ENCODE measurements at regions of chr7 and their contacts with region 1.

Region 1: GRCh38 chr7:151705636-151706276 is 171.2 kb downstream of the PRKAG2 start:
- DNase-seq: peak in 1 of 2 experiments; percentile 63
- H3K4me3 ChIP-seq: no peak overlapping the region
- H3K27ac ChIP-seq: no peak overlapping the region
- H3K4me1 ChIP-seq: peaks cover 0 to 3% (median under 1%) of the 10 kb centered on the region in 4 experiments; a peak in 3 of 7 replicates
- H3K27me3 ChIP-seq: no peaks in the 10 kb centered on the region; a peak in 3 of 7 replicates
- CTCF ChIP-seq: peak; percentile 51 to 74 (median 67)
- EP300 ChIP-seq: no peak
- POLR2A ChIP-seq: no peak
- RAD21 ChIP-seq: peak; percentile 67 to 73

Region 2: DNA sequence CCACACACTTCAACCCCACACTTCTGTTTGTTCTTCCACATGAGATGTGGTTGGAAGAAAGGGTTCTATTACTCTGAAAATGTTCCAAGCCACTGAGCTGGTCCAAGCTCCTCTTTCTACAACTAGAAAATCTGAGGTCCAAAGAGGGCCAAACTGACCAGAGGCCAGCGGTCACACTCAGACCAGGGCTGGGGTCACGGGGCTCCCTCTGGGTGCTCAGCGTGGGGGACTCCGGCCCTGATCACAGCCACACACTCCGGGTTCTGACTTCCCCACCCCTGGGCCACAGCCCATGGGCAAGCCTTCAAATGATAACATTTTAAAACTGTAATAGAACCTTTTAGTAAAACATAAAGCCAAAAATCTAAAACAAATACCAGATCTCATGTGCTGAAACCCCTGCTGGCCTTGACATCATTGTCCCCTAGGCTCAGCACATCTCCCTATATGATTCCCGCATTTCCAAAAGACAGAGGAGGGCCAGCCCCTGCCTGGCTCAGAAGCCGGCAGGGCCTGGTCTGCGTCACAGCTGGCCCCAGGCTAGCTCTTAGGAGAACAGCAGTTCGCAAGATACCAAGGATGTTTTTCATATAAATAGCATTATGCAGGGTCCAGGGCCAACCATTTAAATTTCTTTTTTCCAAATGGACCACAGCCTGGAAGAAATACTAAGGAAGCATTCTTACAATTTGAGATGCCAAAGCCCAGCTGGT is 269.2 kb before region 1 on chr7:
- CTCF ChIA-PET with region 1: no interaction called
- POLR2A ChIA-PET with region 1: no interaction called
- DNase-seq: no peak
- H3K4me3 ChIP-seq: no peak overlapping the region
- H3K27ac ChIP-seq: no peak overlapping the region
- H3K4me1 ChIP-seq: peaks cover 0 to 17% (median 6%) of the 10 kb centered on the region in 4 experiments; a peak in 6 of 7 replicates
- H3K27me3 ChIP-seq: peaks cover 0 to 7% (median 6%) of the 10 kb centered on the region in 4 experiments; a peak in 4 of 7 replicates
- CTCF ChIP-seq: no peak
- EP300 ChIP-seq: no peak
- POLR2A ChIP-seq: no peak
- RAD21 ChIP-seq: no peak

Region 3: GRCh38 chr7:151590071-151590850 is 115.5 kb before region 1 on chr7:
- CTCF ChIA-PET with region 1: interaction called, 14 read pairs
- POLR2A ChIA-PET with region 1: no interaction called
- DNase-seq: no peak
- H3K4me3 ChIP-seq: no peak overlapping the region
- H3K27ac ChIP-seq: no peak overlapping the region
- H3K4me1 ChIP-seq: peaks cover 0 to 2% (median 0%) of the 10 kb centered on the region in 4 experiments; a peak in 1 of 7 replicates
- H3K27me3 ChIP-seq: no peaks in the 10 kb centered on the region
- CTCF ChIP-seq: no peak
- EP300 ChIP-seq: no peak
- POLR2A ChIP-seq: no peak
- RAD21 ChIP-seq: no peak

Region 4: DNA sequence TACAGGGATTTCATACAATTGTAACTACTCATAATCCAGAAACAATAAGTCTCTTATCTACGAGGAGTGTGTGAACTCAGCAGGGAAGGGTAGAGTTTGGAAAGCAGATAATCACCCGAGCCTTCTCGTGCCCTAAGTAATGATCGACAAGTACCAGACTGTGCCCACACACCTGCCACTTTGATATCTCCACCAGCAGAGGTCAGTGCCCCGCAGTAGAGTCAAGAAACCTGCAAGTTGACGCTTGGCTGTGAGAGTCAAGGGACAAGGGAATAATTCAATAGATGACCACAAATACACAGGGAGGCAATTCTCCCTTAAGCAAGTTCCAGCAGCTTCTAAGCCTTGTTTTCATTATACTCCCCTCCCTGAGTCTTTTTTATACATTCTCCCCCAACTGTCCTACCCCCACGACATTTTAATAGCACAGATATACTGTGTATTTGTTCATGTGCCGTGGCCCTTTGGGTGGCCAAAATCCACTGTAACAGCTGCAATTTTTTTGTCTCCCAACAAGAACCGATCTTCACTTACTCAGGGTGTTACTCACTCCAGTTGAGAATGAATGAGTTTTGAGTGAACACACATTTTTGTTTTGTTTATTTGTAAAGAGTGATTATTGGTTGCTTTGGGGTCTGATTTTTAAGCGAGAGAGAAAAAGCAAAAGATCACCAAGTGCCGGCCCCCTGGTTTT is 79.2 kb before region 1 on chr7:
- CTCF ChIA-PET with region 1: interaction called, 28 read pairs
- POLR2A ChIA-PET with region 1: no interaction called
- DNase-seq: peak in 1 of 2 experiments; percentile 48
- H3K4me3 ChIP-seq: no peak overlapping the region
- H3K27ac ChIP-seq: no peak overlapping the region
- H3K4me1 ChIP-seq: peaks cover 2 to 17% (median 11%) of the 10 kb centered on the region in 4 experiments
- H3K27me3 ChIP-seq: peaks cover 0 to 21% (median 13%) of the 10 kb centered on the region in 4 experiments; a peak in 3 of 7 replicates
- CTCF ChIP-seq: peak; percentile 76 to 89 (median 79)
- EP300 ChIP-seq: no peak
- POLR2A ChIP-seq: no peak
- RAD21 ChIP-seq: peak; percentile 80 to 87

Region 5: GRCh38 chr7:151631968-151632749 is 73.6 kb before region 1 on chr7:
- CTCF ChIA-PET with region 1: interaction called, 28 read pairs
- POLR2A ChIA-PET with region 1: no interaction called
- DNase-seq: peak; percentile 41 to 88
- H3K4me3 ChIP-seq: peak overlapping the region; percentile 44 to 84 (median 78)
- H3K27ac ChIP-seq: no peak overlapping the region
- H3K4me1 ChIP-seq: peaks cover 2 to 17% (median 11%) of the 10 kb centered on the region in 4 experiments
- H3K27me3 ChIP-seq: peaks cover 0 to 25% (median 13%) of the 10 kb centered on the region in 4 experiments; a peak in 5 of 7 replicates
- CTCF ChIP-seq: peak in 2 of 3 experiments; percentile 30 to 36; a peak in 2 of 4 replicates
- EP300 ChIP-seq: peak in 1 of 2 experiments; percentile 47; a peak in 1 of 3 replicates
- POLR2A ChIP-seq: 0 out of 3 replicates have a peak, but pooled peaks of 1 of the 2 experiments have one; percentile 24
- RAD21 ChIP-seq: peak in 1 of 2 experiments; percentile 38; a peak in 1 of 4 replicates

Region 6: DNA sequence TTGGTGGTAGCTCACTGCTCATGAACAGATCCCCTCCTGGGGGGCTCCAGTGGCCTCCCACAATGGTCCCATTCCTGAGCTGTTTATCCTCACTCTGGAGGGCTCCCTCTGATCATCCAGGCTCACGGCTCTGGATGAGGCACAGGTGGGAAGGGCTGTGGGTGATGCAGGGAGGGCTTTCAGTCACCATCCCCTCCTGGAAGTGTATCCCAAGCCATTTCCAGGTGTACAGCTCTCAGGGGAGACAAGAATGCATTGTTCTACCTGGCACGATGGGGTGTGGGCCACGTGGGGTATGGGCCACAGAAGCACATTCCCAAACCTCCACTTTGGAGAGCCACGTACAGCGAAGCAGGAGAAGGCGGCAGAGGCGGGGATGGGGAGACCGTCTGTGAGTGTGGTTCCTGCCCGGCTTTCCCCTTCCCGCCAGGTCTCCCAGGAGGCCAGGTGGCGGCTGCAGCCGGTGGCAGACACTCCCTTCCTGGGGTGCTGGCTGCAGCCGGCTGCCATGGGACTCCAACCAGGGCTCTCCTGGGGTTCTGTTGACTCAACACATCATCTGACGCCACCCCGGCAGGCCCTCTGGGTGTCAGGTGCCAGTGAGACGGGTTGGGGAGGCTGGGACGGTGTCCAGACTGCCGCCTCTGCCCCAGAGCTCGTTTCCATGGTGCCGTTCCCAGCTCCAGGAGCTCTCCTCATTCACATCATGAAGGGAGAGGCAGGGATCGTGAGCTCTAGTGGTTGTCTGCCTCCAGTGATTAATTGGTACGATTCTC is 16.4 kb before region 1 on chr7:
- CTCF ChIA-PET with region 1: interaction called, 21 read pairs
- POLR2A ChIA-PET with region 1: no interaction called
- DNase-seq: no peak
- H3K4me3 ChIP-seq: no peak overlapping the region
- H3K27ac ChIP-seq: no peak overlapping the region; the same call in 1 of the 2 replicates
- H3K4me1 ChIP-seq: peaks cover 0 to 16% (median 4%) of the 10 kb centered on the region in 4 experiments; a peak in 2 of 7 replicates
- H3K27me3 ChIP-seq: peaks cover 0 to 3% (median 0%) of the 10 kb centered on the region in 4 experiments; a peak in 1 of 7 replicates
- CTCF ChIP-seq: no peak
- EP300 ChIP-seq: no peak
- POLR2A ChIP-seq: no peak
- RAD21 ChIP-seq: no peak

Region 7: DNA sequence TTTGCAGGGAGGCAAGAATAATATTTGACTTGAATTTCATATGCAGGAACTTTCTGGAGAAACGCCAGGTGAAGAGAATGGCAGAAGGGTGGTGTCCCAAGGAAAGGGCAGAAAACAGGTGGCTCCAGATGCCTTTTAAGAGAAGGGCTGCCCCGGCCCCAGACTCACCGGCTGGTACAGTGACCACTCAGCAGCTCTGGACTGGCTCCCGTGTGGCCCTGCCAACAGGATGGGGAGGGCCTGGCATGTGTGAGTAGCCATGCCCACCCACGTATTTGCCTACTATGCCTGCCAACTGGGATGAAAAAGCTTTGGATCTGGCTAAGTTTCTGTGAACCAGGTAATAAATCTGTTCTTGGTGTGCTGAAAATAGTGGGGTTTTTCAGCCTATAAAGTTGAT is 11.7 kb after region 1 on chr7:
- CTCF ChIA-PET with region 1: interaction called, 29 read pairs
- POLR2A ChIA-PET with region 1: no interaction called
- DNase-seq: no peak
- H3K4me3 ChIP-seq: no peak overlapping the region
- H3K27ac ChIP-seq: no peak overlapping the region
- H3K4me1 ChIP-seq: no peaks in the 10 kb centered on the region; a peak in 1 of 7 replicates
- H3K27me3 ChIP-seq: no peaks in the 10 kb centered on the region
- CTCF ChIP-seq: no peak
- EP300 ChIP-seq: no peak
- POLR2A ChIP-seq: no peak
- RAD21 ChIP-seq: no peak

Region 8: GRCh38 chr7:151736403-151736909 is 30.7 kb after region 1 on chr7:
- CTCF ChIA-PET with region 1: interaction called, 29 read pairs
- POLR2A ChIA-PET with region 1: no interaction called
- DNase-seq: peak; percentile 44 to 58
- H3K4me3 ChIP-seq: no peak overlapping the region
- H3K27ac ChIP-seq: no peak overlapping the region
- H3K4me1 ChIP-seq: peaks cover 10 to 25% (median 11%) of the 10 kb centered on the region in 4 experiments
- H3K27me3 ChIP-seq: no peaks in the 10 kb centered on the region; a peak in 1 of 7 replicates
- CTCF ChIP-seq: peak; percentile 30 to 62 (median 55)
- EP300 ChIP-seq: no peak
- POLR2A ChIP-seq: no peak
- RAD21 ChIP-seq: peak; percentile 40 to 59; a peak in 3 of 4 replicates

Region 9: DNA sequence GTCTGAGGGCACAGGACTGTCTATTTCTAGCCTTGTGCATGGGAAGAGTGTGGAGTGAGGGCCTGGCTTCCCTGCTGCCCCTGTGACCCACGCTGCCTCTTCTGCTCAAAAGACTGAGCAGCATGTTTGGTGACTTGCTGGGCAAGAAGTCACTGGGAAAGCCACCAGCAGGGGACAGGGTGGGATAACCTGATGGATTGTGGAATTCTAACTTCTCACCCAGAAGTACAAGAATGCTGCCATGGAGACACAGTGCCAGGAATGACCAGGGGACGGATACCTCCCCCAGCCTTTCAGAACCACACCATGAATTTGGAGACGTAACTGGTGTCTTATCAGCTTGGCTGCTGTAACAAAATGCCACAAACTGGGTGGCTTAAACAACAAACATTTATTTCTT is 278.9 kb after region 1 on chr7:
- CTCF ChIA-PET with region 1: no interaction called
- POLR2A ChIA-PET with region 1: no interaction called
- DNase-seq: no peak
- H3K4me3 ChIP-seq: no peak overlapping the region
- H3K27ac ChIP-seq: no peak overlapping the region
- H3K4me1 ChIP-seq: peaks cover 0 to 2% (median 0%) of the 10 kb centered on the region in 4 experiments; a peak in 3 of 7 replicates
- H3K27me3 ChIP-seq: no peaks in the 10 kb centered on the region
- CTCF ChIP-seq: no peak; a peak in 1 of 4 replicates
- EP300 ChIP-seq: no peak
- POLR2A ChIP-seq: no peak
- RAD21 ChIP-seq: no peak